ENCODE measurements at regions of chr20 and their contacts with region 1.

Region 1: GRCh38 chr20:37534401-37535157 is 6.9 kb upstream of the BLCAP start:
- DNase-seq: peak; percentile 84
- H3K4me3 Mint-ChIP-seq: no peak overlapping the region
- H3K27ac Mint-ChIP-seq: peak overlapping the region; percentile 19
- H3K4me1 Mint-ChIP-seq: peaks cover 18% of the 10 kb centered on the region
- H3K27me3 Mint-ChIP-seq: no peaks in the 10 kb centered on the region
- CTCF ChIP-seq: peak; percentile 79

Region 2: DNA sequence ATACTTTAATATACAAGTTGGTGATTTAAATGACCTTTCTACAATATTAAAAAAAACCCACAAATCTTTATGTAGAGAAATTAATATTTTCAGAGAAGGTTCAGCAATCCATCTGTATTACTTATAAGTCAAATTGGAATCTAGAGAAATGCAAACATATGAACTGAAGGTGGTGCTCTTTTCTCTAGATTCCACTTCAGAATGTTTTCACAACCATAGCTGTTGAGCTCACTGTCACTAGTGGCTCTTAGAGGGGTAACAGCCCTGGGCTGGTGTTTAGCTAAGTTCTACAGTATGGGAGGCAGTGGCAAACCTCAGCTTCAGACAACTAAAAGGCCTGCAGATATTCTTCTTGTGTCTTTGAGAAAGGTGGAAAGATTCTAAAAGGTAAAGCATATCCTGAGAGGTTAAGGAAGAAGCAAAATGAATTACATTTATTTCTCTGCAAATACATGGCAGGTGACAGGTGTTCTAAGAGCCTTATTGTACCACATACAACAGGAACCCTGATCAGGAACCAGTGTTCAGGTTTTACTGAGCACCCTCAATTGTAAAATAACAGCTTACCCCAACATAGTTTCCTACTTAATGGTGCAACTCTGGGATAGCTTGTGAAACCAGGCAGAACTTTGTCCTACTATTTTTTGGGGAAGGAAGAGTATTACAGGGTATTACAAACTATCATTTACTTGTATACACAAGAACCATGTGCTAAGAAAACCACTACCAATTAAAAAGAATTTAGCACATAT is 526.5 kb before region 1 on chr20:
- CTCF ChIA-PET with region 1: no interaction called
- POLR2A ChIA-PET with region 1: no interaction called
- intact Hi-C with region 1: loop called (anchors 10 kb)
- DNase-seq: peak; percentile 16
- H3K4me3 Mint-ChIP-seq: no peak overlapping the region
- H3K27ac Mint-ChIP-seq: no peak overlapping the region
- H3K4me1 Mint-ChIP-seq: no peaks in the 10 kb centered on the region
- H3K27me3 Mint-ChIP-seq: no peaks in the 10 kb centered on the region
- CTCF ChIP-seq: peak; percentile 23

Region 3: GRCh38 chr20:37202267-37202943 is 332.2 kb before region 1 on chr20:
- CTCF ChIA-PET with region 1: interaction called, 191 read pairs
- POLR2A ChIA-PET with region 1: interaction called, 3 read pairs
- intact Hi-C with region 1: loop called (anchors 1 kb)
- DNase-seq: peak; percentile 74
- H3K4me3 Mint-ChIP-seq: no peak overlapping the region
- H3K27ac Mint-ChIP-seq: peak overlapping the region; percentile 62
- H3K4me1 Mint-ChIP-seq: no peaks in the 10 kb centered on the region
- H3K27me3 Mint-ChIP-seq: no peaks in the 10 kb centered on the region
- CTCF ChIP-seq: peak; percentile 66

Region 4: DNA sequence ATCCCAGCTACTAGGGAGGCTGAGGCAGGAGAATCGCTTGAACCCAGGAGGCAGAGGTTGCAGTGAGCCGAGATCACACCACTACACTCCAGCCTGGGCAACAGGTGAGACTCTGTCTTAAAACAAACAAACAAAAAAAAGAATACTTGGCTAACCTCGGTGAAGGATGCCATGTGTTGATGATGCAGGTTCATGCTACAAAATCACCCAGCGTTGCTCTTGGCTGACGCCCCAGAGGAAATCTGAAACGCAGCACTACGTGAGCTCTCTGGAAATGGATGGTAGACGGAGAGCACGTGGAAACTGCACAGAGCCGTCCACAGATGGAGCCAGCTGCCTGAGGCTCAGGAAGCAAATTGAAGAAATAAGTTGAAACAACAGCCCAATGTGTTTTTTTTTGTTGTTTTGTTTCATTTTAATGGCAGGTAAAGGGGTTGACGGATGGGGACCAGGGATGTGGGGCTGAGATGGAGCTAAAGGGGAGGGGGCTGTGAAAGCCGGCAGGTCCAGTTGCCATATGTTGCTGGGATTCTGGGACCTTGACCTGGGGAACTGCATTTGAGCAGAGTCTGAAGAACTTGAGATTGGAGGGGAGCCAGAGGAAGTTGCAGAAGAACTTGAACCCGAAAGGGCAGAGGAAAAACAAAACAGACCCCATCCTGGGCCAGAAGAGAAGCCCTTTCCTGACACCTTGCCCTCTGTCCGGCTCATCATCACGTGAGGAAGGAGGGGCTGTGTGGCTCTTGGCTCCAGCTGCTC is 257.9 kb before region 1 on chr20:
- CTCF ChIA-PET with region 1: interaction called, 175 read pairs
- POLR2A ChIA-PET with region 1: interaction called, 4 read pairs
- intact Hi-C with region 1: loop called (anchors 1 kb)
- DNase-seq: peak; percentile 78
- H3K4me3 Mint-ChIP-seq: no peak overlapping the region
- H3K27ac Mint-ChIP-seq: peak overlapping the region; percentile 34
- H3K4me1 Mint-ChIP-seq: peaks cover 13% of the 10 kb centered on the region
- H3K27me3 Mint-ChIP-seq: no peaks in the 10 kb centered on the region
- CTCF ChIP-seq: peak; percentile 14

Region 5: GRCh38 chr20:37392421-37393178 is 142.0 kb before region 1 on chr20:
- CTCF ChIA-PET with region 1: interaction called, 16 read pairs
- POLR2A ChIA-PET with region 1: interaction called, 3 read pairs
- intact Hi-C with region 1: loop called (anchors 5 kb)
- DNase-seq: no peak
- H3K4me3 Mint-ChIP-seq: no peak overlapping the region
- H3K27ac Mint-ChIP-seq: no peak overlapping the region
- H3K4me1 Mint-ChIP-seq: peaks cover 19% of the 10 kb centered on the region
- H3K27me3 Mint-ChIP-seq: no peaks in the 10 kb centered on the region
- CTCF ChIP-seq: peak; percentile 24

Region 6: DNA sequence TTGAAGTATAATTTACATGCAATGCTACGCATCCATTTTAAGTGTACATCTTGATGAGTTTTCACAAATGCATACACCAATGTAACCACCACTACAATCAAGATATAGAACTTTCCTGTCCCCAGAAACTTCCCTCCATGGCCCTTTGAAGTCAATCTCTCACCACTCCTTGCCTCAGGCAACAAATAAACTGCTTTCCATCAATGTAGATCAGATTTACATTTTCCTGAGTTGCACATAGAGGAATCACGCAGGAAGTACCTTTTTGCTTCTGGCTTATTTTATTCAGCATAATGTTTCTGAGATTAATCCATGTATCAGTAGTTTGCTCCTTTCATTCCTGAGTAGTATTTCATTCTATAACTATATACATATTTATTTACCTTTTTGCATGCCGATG is 73.2 kb before region 1 on chr20:
- CTCF ChIA-PET with region 1: no interaction called
- POLR2A ChIA-PET with region 1: no interaction called
- intact Hi-C with region 1: no loop called
- DNase-seq: no peak
- H3K4me3 Mint-ChIP-seq: no peak overlapping the region
- H3K27ac Mint-ChIP-seq: no peak overlapping the region
- H3K4me1 Mint-ChIP-seq: no peaks in the 10 kb centered on the region
- H3K27me3 Mint-ChIP-seq: peaks cover 40% of the 10 kb centered on the region
- CTCF ChIP-seq: no peak

Measured in MCF 10A (cell line).